SK-N-SH (cell line): ENCODE measurements at regions of chr6 and their contacts with region 1.

Region 1: GRCh38 chr6:160750276-160750689 is 48.2 kb downstream of the PLG start:
- DNase-seq: no peak
- H3K4me3 ChIP-seq: peak overlapping the region in 1 of 2 experiments; percentile 32; a peak in 1 of 4 replicates
- H3K27ac ChIP-seq: no peak overlapping the region
- H3K4me1 ChIP-seq: no peaks in the 10 kb centered on the region
- H3K27me3 ChIP-seq: peaks cover 6% of the 10 kb centered on the region
- CTCF ChIP-seq: peak; percentile 28
- EP300 ChIP-seq: no peak
- RAD21 ChIP-seq: peak; percentile 25; the same call in 1 of the 2 replicates

Region 2: DNA sequence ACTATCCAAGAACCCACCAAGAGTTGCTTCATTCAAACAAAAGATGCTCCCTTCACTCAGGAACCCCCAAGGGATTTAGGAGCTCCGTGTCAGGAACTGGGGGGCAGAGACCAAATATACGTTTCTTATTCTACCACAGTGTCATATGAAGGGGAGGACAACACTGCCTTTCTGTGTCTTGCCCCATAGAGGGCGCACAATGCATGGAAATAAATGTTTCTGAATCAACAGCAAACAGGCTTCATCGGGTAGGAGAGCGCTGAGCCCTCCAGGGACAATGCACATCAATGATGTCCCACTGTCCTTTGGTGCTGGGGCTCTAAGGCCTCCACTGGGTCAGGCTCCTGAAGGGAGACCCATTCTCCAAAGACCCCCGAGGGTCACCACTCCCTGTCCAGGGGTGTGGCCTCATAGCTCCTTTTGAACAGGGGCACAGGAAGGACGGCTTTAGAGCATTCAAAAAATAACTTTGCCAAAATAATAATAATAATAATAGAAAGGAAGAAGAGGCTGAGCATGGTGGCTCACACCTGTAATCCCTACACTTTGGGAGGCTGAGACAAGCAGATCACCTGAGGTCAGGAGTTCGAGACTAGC is 17.1 kb before region 1 on chr6:
- CTCF ChIA-PET with region 1: interaction called, 14 read pairs
- POLR2A ChIA-PET with region 1: no interaction called
- DNase-seq: peak; percentile 35
- H3K4me3 ChIP-seq: peak overlapping the region in 1 of 2 experiments; percentile 20; a peak in 1 of 4 replicates
- H3K27ac ChIP-seq: no peak overlapping the region
- H3K4me1 ChIP-seq: no peaks in the 10 kb centered on the region
- H3K27me3 ChIP-seq: peaks cover 7% of the 10 kb centered on the region; the same call in 1 of the 2 replicates
- CTCF ChIP-seq: peak; percentile 73
- EP300 ChIP-seq: no peak
- RAD21 ChIP-seq: peak; percentile 77

Region 3: DNA sequence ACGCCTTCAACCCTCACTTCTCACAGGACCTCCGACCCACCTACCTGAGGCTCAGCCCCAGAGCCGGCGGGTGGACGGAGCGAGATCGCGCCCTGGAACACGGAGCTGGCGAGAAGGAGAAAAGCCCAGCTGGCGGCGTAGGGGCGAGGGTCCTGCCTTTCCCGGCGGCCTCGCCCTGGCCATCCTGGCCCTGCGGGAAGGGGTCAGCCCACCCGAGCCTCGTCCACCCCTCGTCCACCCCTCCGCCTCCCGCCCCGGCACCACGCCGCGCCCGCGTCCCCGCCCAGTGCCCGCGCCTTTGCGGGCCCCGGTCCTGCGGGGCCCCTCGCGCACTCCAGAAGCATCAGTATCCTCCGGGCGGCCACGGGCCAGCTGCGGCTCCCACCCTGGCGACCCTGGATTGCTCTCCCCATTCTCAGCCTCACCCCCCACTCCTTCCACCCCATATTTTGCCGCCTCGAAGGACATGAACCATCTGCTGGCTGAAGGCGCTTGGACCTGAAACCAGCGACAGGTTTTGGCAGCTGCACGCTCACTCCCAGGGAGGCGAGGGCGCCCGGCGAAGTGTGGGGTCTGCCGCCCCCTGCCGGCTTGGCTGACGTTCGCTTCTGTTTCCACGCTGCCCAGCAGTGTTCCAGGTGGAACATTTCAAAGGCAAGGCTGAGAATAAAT is 16.8 kb after region 1 on chr6:
- CTCF ChIA-PET with region 1: interaction called, 11 read pairs
- POLR2A ChIA-PET with region 1: no interaction called
- DNase-seq: peak; percentile 84
- H3K4me3 ChIP-seq: peak overlapping the region; percentile 37 to 67
- H3K27ac ChIP-seq: no peak overlapping the region
- H3K4me1 ChIP-seq: no peaks in the 10 kb centered on the region; a peak in 1 of 4 replicates
- H3K27me3 ChIP-seq: no peaks in the 10 kb centered on the region; the same call in 1 of the 2 replicates
- CTCF ChIP-seq: peak; percentile 81
- EP300 ChIP-seq: no peak
- RAD21 ChIP-seq: peak; percentile 61